Left ventricle myocardium superior (tissue), 1 donor: ENCODE measurements at regions of chr16 and their contacts with region 1.

Region 1: DNA sequence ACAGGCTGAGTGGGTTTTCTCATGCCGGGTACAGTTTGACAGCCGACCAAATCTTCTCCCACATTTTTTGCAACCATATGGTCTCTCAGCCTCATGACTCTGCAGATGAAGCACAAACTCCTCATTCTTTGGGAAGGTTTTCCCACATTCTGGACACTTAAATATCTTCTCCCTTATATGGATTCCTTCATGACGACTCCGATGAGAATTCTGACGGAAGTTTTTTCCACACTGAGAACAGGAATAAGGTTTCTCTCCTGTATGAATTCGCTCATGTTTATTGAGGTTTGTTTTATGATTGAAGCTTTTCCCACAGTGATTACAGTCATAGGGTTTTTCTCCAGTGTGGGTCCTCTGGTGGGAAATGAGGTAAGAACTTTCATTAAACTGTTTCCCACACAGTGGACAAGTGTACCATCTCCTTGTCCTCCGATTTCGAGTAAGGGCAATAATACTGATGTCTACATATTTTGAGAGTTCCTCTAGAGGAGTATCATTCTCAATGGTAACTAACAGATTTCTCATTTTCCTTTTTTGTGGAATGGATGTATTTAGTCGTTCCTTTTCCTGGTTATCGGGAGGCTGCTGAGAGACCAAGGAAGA is 10.9 kb downstream of the ZNF200 start:
- DNase-seq: no peak
- ATAC-seq: no peak

Region 2: GRCh38 chr16:3304370-3304769 is 80.4 kb after region 1 on chr16:
- intact Hi-C with region 1: no loop called
- DNase-seq: no peak
- ATAC-seq: no peak

Region 3: DNA sequence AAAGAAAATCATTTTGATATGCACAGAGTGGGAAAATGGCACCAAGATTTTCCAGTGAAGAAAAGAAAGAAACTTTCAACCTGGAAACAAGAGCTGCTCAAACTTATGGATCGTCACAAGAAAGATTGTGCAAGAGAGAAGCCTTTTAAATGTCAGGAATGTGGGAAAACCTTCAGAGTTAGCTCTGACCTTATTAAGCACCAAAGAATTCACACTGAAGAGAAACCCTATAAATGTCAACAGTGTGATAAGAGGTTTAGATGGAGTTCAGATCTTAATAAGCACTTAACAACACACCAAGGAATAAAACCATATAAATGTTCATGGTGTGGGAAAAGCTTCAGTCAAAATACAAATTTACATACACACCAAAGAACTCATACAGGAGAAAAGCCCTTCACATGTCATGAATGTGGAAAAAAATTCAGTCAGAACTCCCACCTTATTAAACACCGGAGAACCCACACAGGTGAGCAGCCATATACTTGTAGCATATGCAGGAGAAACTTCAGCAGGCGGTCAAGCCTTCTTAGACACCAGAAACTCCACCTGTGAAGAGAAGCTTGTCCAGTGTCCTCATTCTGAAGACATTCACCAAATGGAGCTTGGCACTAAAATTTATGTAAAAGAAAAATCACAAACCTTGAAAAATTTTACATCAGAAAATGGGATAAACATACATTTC is 93.4 kb after region 1 on chr16:
- intact Hi-C with region 1: loop called (anchors 10 kb)
- DNase-seq: no peak
- ATAC-seq: no peak

Region 4: DNA sequence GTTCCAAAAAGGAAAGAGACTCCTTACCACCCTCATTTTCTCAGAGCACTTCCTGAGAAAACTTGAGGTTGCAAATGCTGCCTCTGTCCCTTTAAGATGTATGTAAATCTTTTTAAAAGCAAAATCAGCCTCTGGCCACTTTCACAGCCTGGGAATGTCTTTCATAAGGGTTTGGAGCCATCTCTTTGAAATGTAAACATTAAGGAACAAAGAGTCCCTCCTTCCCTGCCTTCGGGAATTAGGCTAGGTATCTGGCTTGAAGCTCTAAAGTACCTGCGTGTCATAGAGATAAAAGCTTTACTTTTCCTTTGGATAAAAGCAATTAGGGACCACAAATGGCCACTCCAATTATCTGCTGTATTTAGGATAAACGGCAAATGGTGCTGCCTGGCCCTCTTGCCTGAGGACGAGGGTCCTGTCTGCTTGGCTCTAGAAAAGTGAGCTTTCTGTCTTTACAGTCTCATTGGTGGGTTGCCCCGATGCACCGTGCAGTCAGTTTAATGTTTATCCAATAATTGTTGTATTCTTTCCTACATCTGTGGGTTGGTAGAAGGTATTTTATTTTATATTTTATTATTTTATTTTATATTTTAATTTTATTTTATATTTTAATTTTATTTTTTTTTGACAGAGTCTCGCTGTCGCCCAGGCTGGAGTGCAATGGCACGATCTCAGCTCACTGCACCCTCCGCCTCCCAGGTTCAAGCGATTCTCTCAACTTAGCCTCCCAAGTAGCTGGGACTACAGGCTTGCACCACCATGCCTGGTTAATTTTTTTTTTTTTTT is 329.3 kb after region 1 on chr16:
- intact Hi-C with region 1: no loop called
- DNase-seq: no peak
- ATAC-seq: no peak

Region 5: GRCh38 chr16:3863587-3863986 is 639.6 kb after region 1 on chr16:
- intact Hi-C with region 1: no loop called
- DNase-seq: no peak
- ATAC-seq: peak; percentile 70